ENCODE measurements at regions of chr14 and their contacts with region 1.

Region 1: DNA sequence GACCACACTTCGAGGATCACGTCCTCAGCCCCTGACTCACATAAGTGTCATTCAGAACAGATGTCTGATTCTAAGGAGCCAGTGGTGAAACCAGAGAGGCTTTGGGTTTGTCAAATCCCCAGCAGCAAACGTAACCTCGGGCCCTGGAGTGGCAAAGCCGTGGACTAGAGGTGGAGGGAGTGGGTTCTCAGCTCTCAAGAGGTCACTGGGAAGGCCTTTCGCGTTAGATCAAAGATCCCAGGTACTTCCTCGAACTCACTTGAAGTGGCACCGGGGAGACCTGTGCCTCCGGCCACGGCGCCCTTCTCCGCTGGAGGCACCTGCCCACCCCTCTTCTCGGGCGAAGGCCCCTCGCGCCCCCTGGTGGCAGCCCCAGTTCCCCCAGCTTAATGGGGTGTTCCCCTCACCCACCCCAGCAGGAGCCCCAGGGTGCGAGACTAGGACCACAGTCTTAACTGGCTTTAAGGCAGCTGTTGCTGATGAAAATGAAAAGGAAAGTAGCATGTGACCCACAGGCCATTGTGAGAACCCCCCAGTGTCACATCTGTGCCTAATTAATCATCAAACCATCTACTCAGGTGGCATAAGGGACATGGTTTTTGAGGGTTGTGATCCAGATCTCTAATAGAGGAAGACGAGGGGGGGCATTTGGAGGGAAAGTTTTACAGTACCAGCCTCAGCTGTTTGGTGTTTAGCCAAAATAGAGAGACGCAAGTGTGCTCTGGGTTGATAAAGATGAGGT is 672 bp upstream of the ESR2 start:
- DNase-seq: peak; percentile 91
- H3K4me3 Mint-ChIP-seq: peak overlapping the region; percentile 68
- H3K27ac Mint-ChIP-seq: no peak overlapping the region
- H3K4me1 Mint-ChIP-seq: peaks cover 39% of the 10 kb centered on the region
- H3K27me3 Mint-ChIP-seq: peaks cover 18% of the 10 kb centered on the region

Region 2: GRCh38 chr14:63470962-63471793 is 823.7 kb before region 1 on chr14:
- CTCF ChIA-PET with region 1: no interaction called
- intact Hi-C with region 1: loop called (anchors 10 kb)
- DNase-seq: no peak
- H3K4me3 Mint-ChIP-seq: no peak overlapping the region
- H3K27ac Mint-ChIP-seq: no peak overlapping the region
- H3K4me1 Mint-ChIP-seq: peaks cover 60% of the 10 kb centered on the region
- H3K27me3 Mint-ChIP-seq: no peaks in the 10 kb centered on the region

Region 3: GRCh38 chr14:63800651-63801375 is 494.0 kb before region 1 on chr14:
- CTCF ChIA-PET with region 1: interaction called, 24 read pairs
- intact Hi-C with region 1: loop called (anchors 1 kb)
- DNase-seq: no peak
- H3K4me3 Mint-ChIP-seq: no peak overlapping the region
- H3K27ac Mint-ChIP-seq: no peak overlapping the region
- H3K4me1 Mint-ChIP-seq: no peaks in the 10 kb centered on the region
- H3K27me3 Mint-ChIP-seq: no peaks in the 10 kb centered on the region

Region 4: GRCh38 chr14:64005822-64006221 is 289.0 kb before region 1 on chr14:
- CTCF ChIA-PET with region 1: interaction called, 3 read pairs
- intact Hi-C with region 1: loop called (anchors 1 kb)
- DNase-seq: no peak
- H3K4me3 Mint-ChIP-seq: no peak overlapping the region
- H3K27ac Mint-ChIP-seq: no peak overlapping the region
- H3K4me1 Mint-ChIP-seq: no peaks in the 10 kb centered on the region
- H3K27me3 Mint-ChIP-seq: no peaks in the 10 kb centered on the region

Region 5: DNA sequence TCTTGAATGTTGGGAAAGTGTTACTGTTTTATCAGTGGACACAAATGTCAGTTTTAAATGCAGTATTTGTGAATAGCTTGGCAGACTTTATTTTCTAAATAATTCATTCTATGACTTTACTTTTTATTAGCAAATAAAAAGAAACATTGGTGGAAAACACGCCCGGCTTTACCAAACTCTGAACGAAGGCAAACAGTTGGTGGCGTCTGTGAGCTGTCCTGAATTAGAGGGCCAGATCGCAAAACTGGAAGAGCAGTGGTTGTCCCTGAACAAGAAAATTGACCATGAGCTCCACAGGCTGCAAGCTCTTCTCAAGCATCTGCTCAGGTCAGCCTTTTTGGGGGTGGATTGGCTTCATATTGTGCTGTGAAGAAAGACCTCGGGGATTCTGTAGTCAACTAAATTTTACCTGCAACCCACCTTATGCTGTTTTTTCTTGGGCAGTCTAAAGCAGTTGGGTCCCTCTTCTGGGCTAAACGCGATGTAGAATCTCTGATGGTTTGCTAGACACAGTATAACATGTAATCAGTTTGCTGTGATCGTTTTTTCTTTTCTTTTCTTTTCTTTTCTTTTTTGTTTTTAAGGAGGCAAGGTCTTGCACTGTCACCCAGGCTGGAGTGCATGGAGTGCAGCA is 157.1 kb before region 1 on chr14:
- CTCF ChIA-PET with region 1: interaction called, 4 read pairs
- intact Hi-C with region 1: loop called (anchors 2 kb)
- DNase-seq: no peak
- H3K4me3 Mint-ChIP-seq: no peak overlapping the region
- H3K27ac Mint-ChIP-seq: no peak overlapping the region
- H3K4me1 Mint-ChIP-seq: no peaks in the 10 kb centered on the region
- H3K27me3 Mint-ChIP-seq: no peaks in the 10 kb centered on the region

Region 6: DNA sequence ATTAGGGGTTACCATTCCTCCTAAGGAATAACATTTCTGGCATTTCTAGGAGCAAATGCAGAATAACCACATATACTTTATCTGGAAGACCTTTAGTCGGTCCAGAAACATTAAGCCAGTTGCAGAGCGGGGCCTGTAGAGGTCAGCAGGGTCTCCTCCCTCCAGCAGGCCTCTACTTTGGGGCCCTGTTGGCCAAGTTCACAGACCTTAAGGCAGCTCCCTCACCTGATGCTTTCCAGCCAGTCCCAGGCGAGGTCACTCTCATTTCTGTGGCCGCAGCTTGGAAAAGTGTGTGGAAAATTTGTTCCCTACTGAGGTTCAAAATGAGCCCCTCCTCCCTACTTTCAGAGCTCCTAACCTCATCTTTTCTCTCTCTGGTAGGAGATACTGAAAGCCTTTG is 74.8 kb before region 1 on chr14:
- CTCF ChIA-PET with region 1: no interaction called
- intact Hi-C with region 1: no loop called
- DNase-seq: no peak
- H3K4me3 Mint-ChIP-seq: no peak overlapping the region
- H3K27ac Mint-ChIP-seq: no peak overlapping the region
- H3K4me1 Mint-ChIP-seq: no peaks in the 10 kb centered on the region
- H3K27me3 Mint-ChIP-seq: no peaks in the 10 kb centered on the region

Region 7: DNA sequence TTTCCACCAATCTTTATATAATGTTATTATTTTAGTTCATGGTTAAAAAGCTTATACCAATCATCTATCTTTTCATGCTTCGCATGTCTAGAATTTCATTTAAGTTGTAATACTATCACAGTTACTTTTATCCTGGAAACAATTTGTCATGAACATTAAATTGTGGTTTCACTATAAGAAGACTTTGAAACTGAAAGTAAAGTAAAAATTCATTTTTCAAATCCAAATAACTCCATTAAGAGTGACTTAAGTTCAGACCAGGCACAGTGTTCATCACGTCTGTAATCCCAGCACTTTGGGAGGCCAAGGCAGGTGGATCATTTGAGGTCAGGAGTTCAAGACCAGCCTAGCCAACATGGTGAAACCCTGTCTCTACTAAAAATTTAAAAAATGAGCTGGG is 13.0 kb before region 1 on chr14:
- CTCF ChIA-PET with region 1: interaction called, 4 read pairs
- intact Hi-C with region 1: loop called (anchors 1 kb)
- DNase-seq: no peak
- H3K4me3 Mint-ChIP-seq: no peak overlapping the region
- H3K27ac Mint-ChIP-seq: peak overlapping the region; percentile 48
- H3K4me1 Mint-ChIP-seq: peaks cover 19% of the 10 kb centered on the region
- H3K27me3 Mint-ChIP-seq: no peaks in the 10 kb centered on the region

Region 8: GRCh38 chr14:64549781-64550620 is 255.2 kb after region 1 on chr14 and contains the start of gene PPP1R36:
- CTCF ChIA-PET with region 1: no interaction called
- intact Hi-C with region 1: no loop called
- DNase-seq: peak; percentile 48
- H3K4me3 Mint-ChIP-seq: peak within 1 kb of the TSS; percentile 55
- H3K27ac Mint-ChIP-seq: no peak within 1 kb of the TSS
- H3K4me1 Mint-ChIP-seq: peaks cover 12% of the 10 kb centered on the region
- H3K27me3 Mint-ChIP-seq: peaks cover 7% of the 10 kb centered on the region
- total RNA-seq, gene PPP1R36: not detected

Measured in activated naive CD4-positive, alpha-beta T cell treated with anti-CD3 and anti-CD28 coated beads for 36 hours (primary cell).